Lower leg skin (tissue), 4 donors: ENCODE measurements at regions of chr17 and their contacts with region 1.

Region 1: DNA sequence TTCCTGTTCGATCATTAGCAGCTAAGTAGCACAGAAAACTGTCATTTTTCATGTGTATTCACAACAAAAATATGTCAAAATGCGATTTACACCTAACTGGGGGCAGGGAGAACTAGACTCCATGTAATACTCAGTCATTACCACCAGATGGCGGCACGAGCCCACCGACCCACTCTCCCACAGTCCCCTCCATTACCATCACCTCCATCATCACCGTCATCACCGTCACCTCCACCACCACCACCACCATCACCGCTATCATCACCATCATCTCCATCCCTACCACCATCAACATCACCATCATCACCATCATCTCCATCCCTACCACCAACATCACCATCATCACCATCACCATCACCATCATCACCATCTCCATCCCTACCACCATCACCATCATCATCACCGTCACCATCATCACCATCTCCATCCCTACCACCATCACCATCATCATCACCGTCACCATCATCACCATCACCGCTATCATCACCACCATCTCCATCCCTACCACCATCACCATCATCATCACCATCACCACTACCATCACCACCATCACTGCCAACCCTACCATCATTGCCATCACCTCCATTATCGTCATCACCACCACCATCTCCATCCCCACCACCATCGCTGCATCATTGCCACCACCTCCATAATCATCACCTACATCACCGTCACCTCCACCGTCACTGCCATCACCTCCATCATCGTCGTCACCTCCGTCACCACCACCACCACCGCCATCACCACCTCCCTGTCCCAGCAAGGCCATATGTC is 14.4 kb downstream of the NDUFAF8 start:
- DNase-seq: no peak
- H3K4me3 ChIP-seq: no peak overlapping the region
- CTCF ChIP-seq: peak in 1 of 3 donors; percentile 95
- POLR2A ChIP-seq: no peak

Region 2: DNA sequence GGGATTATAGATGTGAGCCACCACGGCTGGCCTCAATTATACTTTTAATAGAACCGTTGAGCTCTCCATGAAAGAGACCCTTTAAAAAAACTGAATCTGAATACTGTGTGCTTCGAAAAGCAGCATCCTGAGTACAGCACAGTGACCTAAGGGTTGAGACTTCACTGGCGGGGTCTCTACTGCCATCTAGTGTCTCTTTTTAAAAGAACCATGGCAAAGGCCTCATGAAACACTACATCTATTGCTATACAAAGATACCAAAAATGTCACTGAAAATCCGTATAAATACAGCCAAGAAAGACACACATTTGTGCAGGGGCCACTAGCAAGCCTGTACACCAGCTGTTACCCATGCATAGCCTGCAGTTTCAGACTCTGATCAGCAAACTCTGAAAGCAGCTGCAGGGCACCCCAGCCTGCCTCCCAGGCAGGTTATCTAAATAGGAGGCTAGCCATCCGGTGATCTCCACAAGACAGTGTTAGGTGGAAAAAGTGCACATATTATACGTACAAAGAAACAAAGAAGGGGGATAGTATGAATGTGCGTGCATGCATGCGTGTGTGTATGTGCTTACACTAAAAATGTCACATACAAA is 348.1 kb after region 1 on chr17:
- intact Hi-C with region 1: loop called (anchors 10 kb)
- DNase-seq: peak in 1 of 2 donors; percentile 47
- H3K4me3 ChIP-seq: no peak overlapping the region
- CTCF ChIP-seq: no peak
- POLR2A ChIP-seq: no peak